SK-N-SH (cell line): ENCODE measurements at regions of chr1 and their contacts with region 1.

Region 1: DNA sequence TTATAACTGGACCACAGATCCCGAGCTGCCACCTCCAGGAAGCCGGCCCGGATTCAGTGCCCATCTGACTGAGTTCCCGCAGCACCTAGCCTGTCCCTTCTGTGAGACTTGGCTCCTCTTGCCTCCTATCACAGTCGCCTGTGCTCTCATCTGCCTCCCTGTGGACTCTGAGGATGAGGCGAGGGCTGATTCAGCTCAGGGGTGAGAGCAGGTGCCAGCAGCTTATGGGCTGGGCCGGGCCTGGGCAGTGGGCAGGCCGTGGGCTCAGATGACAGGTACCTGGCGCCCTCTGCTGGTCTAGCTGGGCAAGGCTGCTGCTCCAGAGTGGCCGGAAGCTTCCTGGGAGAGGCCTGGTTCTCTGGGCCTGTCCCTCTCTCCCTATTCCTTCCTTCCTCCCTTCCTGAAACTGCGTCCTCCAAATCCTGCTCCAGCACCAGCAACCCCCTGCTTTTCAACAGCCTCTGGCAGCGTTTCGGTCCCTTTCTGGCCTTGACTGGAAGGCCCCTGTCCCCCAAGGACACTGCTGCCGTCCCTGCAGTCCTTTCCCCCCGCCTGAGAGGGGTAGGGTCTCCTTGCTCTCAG is 17.3 kb upstream of the PCSK9 start:
- DNase-seq: peak; percentile 93
- H3K4me3 ChIP-seq: no peak overlapping the region; a peak in 1 of 4 replicates
- H3K27ac ChIP-seq: no peak overlapping the region
- H3K4me1 ChIP-seq: no peaks in the 10 kb centered on the region; a peak in 1 of 4 replicates
- H3K27me3 ChIP-seq: no peaks in the 10 kb centered on the region
- CTCF ChIP-seq: peak; percentile 92
- EP300 ChIP-seq: no peak
- RAD21 ChIP-seq: peak; percentile 91

Region 2: DNA sequence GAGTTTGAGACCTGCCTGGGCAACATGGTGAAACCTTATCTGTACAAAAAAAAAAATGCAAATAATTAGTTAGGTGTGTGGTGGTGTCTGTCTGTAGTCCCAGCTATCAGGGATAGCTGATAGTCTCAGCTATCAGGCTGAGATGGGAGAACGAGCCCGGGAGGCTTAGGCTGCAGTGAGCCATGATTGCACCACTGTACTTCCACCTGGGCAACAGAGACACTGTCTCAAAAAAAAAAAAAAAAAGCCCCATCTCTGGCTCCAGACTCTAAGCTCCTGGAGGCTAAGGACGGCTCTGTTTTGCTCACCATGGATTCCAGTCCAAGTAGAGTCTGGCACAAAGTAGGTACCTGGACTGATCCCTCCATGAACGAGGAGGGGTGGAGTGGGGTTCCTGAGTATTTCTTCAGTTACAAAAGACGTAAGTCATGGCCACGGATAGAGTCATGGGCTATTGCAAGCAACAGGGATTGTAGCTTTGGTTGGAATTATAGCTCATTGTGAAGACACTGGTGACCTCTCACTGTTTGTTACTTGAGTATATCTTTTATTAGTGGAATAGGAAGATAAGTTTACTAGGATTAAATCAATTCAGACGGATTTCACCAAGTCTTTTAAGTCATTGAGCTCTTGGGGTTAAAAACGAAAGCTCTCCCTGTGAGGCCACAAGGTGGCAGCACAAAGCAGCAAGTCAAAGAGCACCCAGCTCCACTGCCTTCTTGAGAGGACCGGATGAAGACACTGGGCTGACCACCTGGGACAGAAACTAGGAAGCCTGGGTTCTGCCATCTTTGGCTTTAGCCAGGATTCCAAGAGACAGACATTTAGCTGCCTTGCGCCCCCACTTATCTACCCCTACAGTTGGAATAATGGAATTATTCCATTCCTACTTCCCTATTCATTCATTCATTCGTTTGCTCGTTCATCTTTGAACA is 77.2 kb before region 1 on chr1:
- CTCF ChIA-PET with region 1: interaction called, 390 read pairs
- POLR2A ChIA-PET with region 1: interaction called, 10 read pairs
- DNase-seq: peak; percentile 72
- H3K4me3 ChIP-seq: no peak overlapping the region
- H3K27ac ChIP-seq: no peak overlapping the region
- H3K4me1 ChIP-seq: peaks cover 0 to under 1% of the 10 kb centered on the region in 2 experiments; a peak in 1 of 4 replicates
- H3K27me3 ChIP-seq: no peaks in the 10 kb centered on the region
- CTCF ChIP-seq: peak; percentile 91
- EP300 ChIP-seq: no peak
- RAD21 ChIP-seq: peak; percentile 82

Region 3: GRCh38 chr1:54959241-54959640 is 62.8 kb before region 1 on chr1:
- CTCF ChIA-PET with region 1: interaction called, 19 read pairs
- POLR2A ChIA-PET with region 1: no interaction called
- DNase-seq: no peak
- H3K4me3 ChIP-seq: no peak overlapping the region
- H3K27ac ChIP-seq: no peak overlapping the region
- H3K4me1 ChIP-seq: no peaks in the 10 kb centered on the region
- H3K27me3 ChIP-seq: no peaks in the 10 kb centered on the region
- CTCF ChIP-seq: no peak
- EP300 ChIP-seq: no peak
- RAD21 ChIP-seq: no peak

Region 4: DNA sequence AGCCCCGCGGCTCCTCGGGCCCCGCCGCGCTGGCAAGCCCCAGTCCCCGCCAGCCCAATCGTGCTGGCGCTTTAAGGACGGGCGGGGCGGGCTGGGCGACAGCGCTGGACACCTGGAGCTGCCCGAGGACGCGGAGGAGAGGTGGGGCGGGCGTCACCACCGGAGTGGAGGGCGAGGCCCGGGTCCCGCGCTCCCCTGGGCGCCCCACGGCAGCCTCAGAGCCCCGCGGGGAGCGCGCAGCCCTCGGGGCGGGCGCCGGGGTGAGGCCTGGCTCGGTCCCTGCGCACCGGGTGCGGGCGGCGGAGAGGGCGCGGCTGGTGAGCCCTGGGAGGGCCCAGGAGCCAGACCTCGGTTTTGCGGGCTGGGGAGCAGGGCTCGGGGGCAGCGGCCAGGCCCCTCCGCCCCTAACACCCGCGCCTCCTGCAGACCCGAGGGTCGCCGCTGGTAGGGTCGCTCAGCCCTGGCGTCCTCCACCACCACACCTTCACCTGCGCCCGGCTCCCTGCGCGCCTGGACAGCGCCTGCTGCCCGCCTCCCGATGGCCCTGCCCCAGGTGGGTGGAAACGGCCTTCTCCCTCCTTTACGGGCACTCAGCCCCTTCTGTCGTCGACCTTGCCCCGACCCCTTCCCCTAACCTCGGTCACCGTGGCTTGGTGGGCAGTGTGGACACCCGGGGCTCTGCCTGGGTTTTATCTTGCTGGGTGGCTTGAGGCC is 41.4 kb before region 1 on chr1 and contains the start of gene TMEM61:
- CTCF ChIA-PET with region 1: interaction called, 15 read pairs
- POLR2A ChIA-PET with region 1: no interaction called
- DNase-seq: peak; percentile 73
- H3K4me3 ChIP-seq: peak within 1 kb of the TSS in 1 of 2 experiments; percentile 40; a peak in 2 of 4 replicates
- H3K27ac ChIP-seq: no peak within 1 kb of the TSS
- H3K4me1 ChIP-seq: no peaks in the 10 kb centered on the region; a peak in 1 of 4 replicates
- H3K27me3 ChIP-seq: no peaks in the 10 kb centered on the region; the same call in 1 of the 2 replicates
- CTCF ChIP-seq: no peak
- EP300 ChIP-seq: no peak
- RAD21 ChIP-seq: no peak
- polyA plus RNA-seq, gene TMEM61: not detected in 2 replicates

Region 5: DNA sequence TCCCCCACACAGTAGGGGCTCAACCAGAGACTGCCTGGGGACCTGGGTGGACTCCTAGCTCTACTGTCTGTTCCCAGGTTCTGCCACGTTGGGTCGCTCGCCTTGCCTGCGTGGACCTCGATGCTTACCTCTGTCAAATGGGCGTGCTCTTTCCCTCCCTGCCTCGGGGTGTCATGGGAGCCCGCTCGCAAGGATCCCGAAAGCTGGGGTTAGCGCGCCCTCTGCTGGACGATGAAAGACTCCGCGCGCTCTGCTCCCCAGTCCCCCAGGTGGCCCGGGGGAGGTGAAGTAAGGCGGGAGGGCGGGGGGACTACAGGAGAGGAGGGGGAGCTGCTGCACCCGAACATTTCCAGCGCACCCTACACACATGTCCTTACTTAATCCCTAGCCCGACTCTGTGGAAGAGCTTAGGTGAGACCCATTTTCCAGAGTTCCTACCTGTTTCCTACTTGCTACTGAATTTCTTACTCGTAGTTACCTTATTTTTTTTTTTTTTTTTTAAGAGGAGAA is 25.6 kb before region 1 on chr1:
- CTCF ChIA-PET with region 1: interaction called, 159 read pairs
- POLR2A ChIA-PET with region 1: no interaction called
- DNase-seq: peak; percentile 96
- H3K4me3 ChIP-seq: peak overlapping the region in 1 of 2 experiments; percentile 49; a peak in 1 of 4 replicates
- H3K27ac ChIP-seq: no peak overlapping the region
- H3K4me1 ChIP-seq: peaks cover 0 to 3% of the 10 kb centered on the region in 2 experiments; a peak in 1 of 4 replicates
- H3K27me3 ChIP-seq: no peaks in the 10 kb centered on the region; the same call in 1 of the 2 replicates
- CTCF ChIP-seq: peak; percentile 87
- EP300 ChIP-seq: no peak
- RAD21 ChIP-seq: peak; percentile 86

Region 6: GRCh38 chr1:55039342-55040082 is 17.5 kb after region 1 on chr1 and contains the start of gene PCSK9:
- CTCF ChIA-PET with region 1: interaction called, 49 read pairs
- POLR2A ChIA-PET with region 1: no interaction called
- DNase-seq: peak; percentile 73
- H3K4me3 ChIP-seq: peak within 1 kb of the TSS; percentile 9 to 20; a peak in 2 of 4 replicates
- H3K27ac ChIP-seq: no peak within 1 kb of the TSS
- H3K4me1 ChIP-seq: peaks cover 0 to 16% of the 10 kb centered on the region in 2 experiments; a peak in 1 of 4 replicates
- H3K27me3 ChIP-seq: peaks cover 58% of the 10 kb centered on the region
- CTCF ChIP-seq: no peak
- EP300 ChIP-seq: no peak
- RAD21 ChIP-seq: no peak
- polyA plus RNA-seq, gene PCSK9: 0.02 and 0.03 TPM in 2 replicates

Region 7: GRCh38 chr1:55060133-55060999 is 38.3 kb after region 1 on chr1:
- CTCF ChIA-PET with region 1: interaction called, 12 read pairs
- POLR2A ChIA-PET with region 1: no interaction called
- DNase-seq: no peak
- H3K4me3 ChIP-seq: no peak overlapping the region
- H3K27ac ChIP-seq: no peak overlapping the region
- H3K4me1 ChIP-seq: peaks cover 0 to 22% of the 10 kb centered on the region in 2 experiments; a peak in 2 of 4 replicates
- H3K27me3 ChIP-seq: no peaks in the 10 kb centered on the region
- CTCF ChIP-seq: no peak
- EP300 ChIP-seq: no peak
- RAD21 ChIP-seq: no peak